IMR-90 (cell line): ENCODE measurements at regions of chr7 and their contacts with region 1.

Region 1: DNA sequence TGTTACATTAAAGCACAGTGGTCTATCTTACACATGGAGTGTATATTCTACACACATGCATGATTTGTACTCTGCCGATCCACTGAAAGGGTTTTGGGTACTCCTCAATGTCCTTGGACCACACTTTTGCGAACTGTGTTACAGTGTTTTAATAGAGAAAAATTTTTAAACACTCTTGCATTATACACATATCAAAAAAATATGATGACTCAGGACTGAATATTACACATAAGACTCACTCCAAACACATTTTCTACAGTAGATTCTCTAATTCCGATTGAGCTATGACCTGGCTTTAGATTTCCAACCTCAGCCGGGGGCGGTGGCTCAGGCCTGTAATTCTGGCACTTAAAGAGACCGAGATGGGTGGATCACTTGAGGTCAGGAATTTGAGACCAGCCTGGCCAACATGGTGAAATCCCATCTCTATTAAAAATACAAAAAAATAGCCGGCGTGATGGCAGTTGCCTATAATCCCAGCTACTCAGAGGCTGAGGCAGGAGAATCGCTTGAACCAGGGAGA is 222.4 kb downstream of the CACNA2D1 start:
- DNase-seq: peak; percentile 35
- ATAC-seq: peak; percentile 24; the same call in 1 of the 2 replicates
- H3K4me3 ChIP-seq: no peak overlapping the region
- H3K27ac ChIP-seq: no peak overlapping the region
- H3K4me1 ChIP-seq: no peaks in the 10 kb centered on the region
- H3K27me3 ChIP-seq: no peaks in the 10 kb centered on the region
- CTCF ChIP-seq: no peak
- POLR2A ChIP-seq: no peak
- RAD21 ChIP-seq: no peak

Region 2: GRCh38 chr7:82049891-82050533 is 171.2 kb before region 1 on chr7:
- CTCF ChIA-PET with region 1: no interaction called
- POLR2A ChIA-PET with region 1: no interaction called
- dilution Hi-C with region 1: no loop called
- in situ Hi-C with region 1: loop called (anchors 10 kb)
- intact Hi-C with region 1: no loop called
- DNase-seq: peak; percentile 91
- ATAC-seq: peak; percentile 90
- H3K4me3 ChIP-seq: no peak overlapping the region
- H3K27ac ChIP-seq: peak overlapping the region; percentile 19; the same call in 1 of the 2 replicates
- H3K4me1 ChIP-seq: peaks cover 9% of the 10 kb centered on the region
- H3K27me3 ChIP-seq: no peaks in the 10 kb centered on the region
- CTCF ChIP-seq: no peak
- POLR2A ChIP-seq: no peak
- RAD21 ChIP-seq: no peak

Region 3: DNA sequence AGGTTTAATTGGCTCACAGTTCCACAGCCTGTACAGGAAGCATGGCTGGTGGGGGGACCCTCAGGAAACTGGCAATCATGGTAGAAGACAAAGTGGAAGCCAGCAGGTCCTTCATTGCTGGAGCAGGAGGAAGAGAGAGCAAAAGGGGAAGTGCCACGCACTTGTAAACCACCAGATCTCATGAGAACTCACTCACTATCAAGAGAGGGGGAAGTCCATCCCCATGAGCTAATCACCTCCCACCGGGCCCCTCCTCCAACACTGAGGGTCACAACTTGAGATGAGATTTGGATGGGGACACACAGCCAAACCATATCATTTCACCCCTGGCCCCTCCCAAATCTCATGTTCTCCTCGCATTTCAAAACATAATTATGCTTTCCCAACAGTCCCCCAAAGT is 394.3 kb after region 1 on chr7:
- CTCF ChIA-PET with region 1: no interaction called
- POLR2A ChIA-PET with region 1: interaction called, 10 read pairs
- dilution Hi-C with region 1: no loop called
- in situ Hi-C with region 1: no loop called
- intact Hi-C with region 1: no loop called
- DNase-seq: no peak
- ATAC-seq: no peak
- H3K4me3 ChIP-seq: no peak overlapping the region
- H3K27ac ChIP-seq: no peak overlapping the region
- H3K4me1 ChIP-seq: no peaks in the 10 kb centered on the region
- H3K27me3 ChIP-seq: no peaks in the 10 kb centered on the region
- CTCF ChIP-seq: no peak
- POLR2A ChIP-seq: no peak
- RAD21 ChIP-seq: no peak